SK-N-SH (cell line): ENCODE measurements at regions of chr1 and their contacts with region 1.

Region 1: DNA sequence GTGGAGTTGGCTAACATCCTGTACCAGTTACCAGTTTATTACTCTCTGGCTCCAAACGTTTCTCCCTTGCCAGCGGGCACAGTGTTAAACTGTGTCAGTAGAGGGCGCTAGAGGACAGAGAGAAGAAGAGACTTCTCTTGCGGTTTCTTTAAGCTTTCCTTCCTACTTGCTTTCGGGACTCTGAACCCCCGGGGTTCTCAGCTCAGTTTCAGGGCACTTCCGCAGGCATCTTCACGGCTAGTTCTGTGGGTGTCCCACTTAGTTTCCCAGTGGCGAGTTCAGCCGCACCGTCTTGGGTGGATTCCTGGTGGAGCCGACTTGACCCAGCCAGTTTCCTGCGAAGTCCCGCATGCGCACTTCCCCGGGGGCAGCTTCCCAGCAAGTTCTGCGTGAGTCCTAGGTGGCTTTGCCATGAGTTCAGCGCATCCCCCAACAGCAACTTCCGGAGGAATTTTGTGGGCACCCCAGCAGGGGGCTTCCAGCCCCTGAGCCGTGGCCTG is 37.9 kb upstream of the BTG2 start:
- DNase-seq: peak; percentile 80
- H3K4me3 ChIP-seq: peak overlapping the region; percentile 65
- H3K27ac ChIP-seq: peak overlapping the region in 1 of 2 experiments; percentile 75; a peak in 1 of 4 replicates
- H3K4me1 ChIP-seq: peaks cover 0 to 15% of the 10 kb centered on the region in 2 experiments; a peak in 1 of 4 replicates
- H3K27me3 ChIP-seq: no peaks in the 10 kb centered on the region; the same call in 1 of the 2 replicates
- CTCF ChIP-seq: peak; percentile 95
- EP300 ChIP-seq: no peak
- RAD21 ChIP-seq: peak; percentile 79

Region 2: DNA sequence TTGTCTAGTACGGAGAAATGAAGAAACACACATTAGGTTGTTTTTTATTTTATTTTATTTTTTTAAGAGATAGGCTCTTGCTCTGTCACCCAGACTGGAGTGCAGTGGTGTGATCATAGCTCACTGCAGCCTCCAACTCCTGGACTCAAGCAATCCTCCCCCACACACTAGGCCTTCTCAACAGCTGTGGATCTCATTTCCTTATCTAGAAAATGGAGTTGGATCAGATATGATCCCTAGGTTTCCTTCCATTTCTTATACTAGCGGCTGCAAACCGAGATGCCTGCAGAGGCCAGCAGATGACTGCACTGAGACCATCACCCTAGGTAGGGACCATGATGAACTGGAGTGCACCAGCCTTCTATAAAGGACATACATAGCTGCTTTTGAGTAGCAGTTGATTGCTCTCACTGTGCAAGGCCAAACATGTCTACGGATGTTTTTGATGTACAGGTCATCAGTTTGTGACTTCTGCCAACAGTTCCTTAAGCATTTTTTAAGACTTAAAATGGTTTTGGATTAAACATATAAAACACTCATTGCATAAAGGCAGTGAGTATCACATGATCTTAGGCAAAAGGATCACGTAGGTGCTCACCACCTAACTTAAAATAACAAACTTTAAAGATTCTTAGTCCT is 329.0 kb before region 1 on chr1:
- CTCF ChIA-PET with region 1: no interaction called
- POLR2A ChIA-PET with region 1: no interaction called
- DNase-seq: no peak
- H3K4me3 ChIP-seq: no peak overlapping the region
- H3K27ac ChIP-seq: no peak overlapping the region
- H3K4me1 ChIP-seq: no peaks in the 10 kb centered on the region
- H3K27me3 ChIP-seq: no peaks in the 10 kb centered on the region
- CTCF ChIP-seq: no peak
- EP300 ChIP-seq: no peak
- RAD21 ChIP-seq: no peak

Region 3: DNA sequence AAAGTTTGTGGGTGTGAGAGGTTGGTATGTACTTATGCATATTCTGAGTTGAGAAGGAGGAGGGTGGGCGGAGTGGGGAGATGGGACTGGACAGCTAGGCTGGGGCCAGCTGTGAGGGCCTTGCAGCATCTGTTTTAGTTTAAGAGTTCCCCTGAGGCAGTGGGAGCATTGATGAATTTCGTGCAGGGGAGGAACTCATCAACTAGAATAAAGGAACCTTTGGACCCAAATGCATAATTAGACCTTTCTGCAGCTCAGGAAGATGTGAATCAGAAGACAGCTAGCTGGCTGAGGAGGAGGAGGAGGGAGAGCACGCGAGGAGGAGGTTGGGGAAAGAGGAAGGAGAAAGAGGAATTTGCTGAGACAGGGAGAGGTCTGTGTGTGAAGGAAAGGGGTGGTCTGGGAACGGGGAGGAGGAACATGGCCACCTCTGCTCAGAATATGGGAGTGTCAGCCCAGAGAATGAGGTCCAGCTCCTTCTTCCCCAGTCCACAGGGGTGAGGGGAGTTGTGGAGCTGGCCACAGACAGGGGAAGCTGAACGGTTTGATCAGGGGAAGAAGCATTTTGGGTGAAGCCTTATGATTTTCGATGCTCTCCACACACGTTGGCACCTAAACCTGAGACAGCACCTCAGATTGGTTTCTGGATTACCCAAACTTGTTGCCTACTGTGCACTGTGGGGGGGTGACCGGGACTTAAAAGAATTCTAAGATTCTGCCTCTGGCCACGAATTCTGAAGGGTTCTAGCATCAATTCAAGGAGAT is 209.3 kb before region 1 on chr1:
- CTCF ChIA-PET with region 1: interaction called, 228 read pairs
- POLR2A ChIA-PET with region 1: no interaction called
- DNase-seq: peak; percentile 83
- H3K4me3 ChIP-seq: no peak overlapping the region
- H3K27ac ChIP-seq: no peak overlapping the region
- H3K4me1 ChIP-seq: peaks cover 0 to 22% of the 10 kb centered on the region in 2 experiments; a peak in 1 of 4 replicates
- H3K27me3 ChIP-seq: no peaks in the 10 kb centered on the region
- CTCF ChIP-seq: no peak
- EP300 ChIP-seq: no peak
- RAD21 ChIP-seq: no peak

Region 4: GRCh38 chr1:203172128-203173010 is 95.0 kb before region 1 on chr1:
- CTCF ChIA-PET with region 1: interaction called, 15 read pairs
- POLR2A ChIA-PET with region 1: no interaction called
- DNase-seq: peak; percentile 77
- H3K4me3 ChIP-seq: no peak overlapping the region
- H3K27ac ChIP-seq: no peak overlapping the region
- H3K4me1 ChIP-seq: peaks cover 5 to 7% of the 10 kb centered on the region in 2 experiments; a peak in 2 of 4 replicates
- H3K27me3 ChIP-seq: no peaks in the 10 kb centered on the region
- CTCF ChIP-seq: peak; percentile 69
- EP300 ChIP-seq: no peak
- RAD21 ChIP-seq: peak; percentile 66

Region 5: DNA sequence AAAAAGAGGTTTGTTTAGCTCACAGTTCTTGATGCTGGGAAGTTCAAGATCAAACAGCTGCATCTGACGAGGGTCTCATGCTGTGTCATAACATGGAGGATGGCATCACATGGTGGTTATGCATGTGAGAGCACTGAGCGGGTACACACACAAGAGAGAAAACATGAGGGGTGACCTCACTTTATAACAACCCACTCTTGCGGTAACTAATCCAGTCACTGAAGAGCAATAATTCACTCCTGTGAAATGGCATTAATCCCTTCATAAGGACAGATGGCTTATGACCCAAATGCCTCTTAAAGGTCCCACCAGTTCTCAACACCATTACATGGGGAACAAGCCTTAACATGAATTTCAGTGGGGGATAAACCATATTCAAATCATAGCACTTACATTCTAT is 14.7 kb before region 1 on chr1:
- CTCF ChIA-PET with region 1: interaction called, 32 read pairs
- POLR2A ChIA-PET with region 1: no interaction called
- DNase-seq: no peak
- H3K4me3 ChIP-seq: no peak overlapping the region
- H3K27ac ChIP-seq: no peak overlapping the region
- H3K4me1 ChIP-seq: no peaks in the 10 kb centered on the region
- H3K27me3 ChIP-seq: no peaks in the 10 kb centered on the region
- CTCF ChIP-seq: no peak
- EP300 ChIP-seq: no peak
- RAD21 ChIP-seq: no peak

Region 6: DNA sequence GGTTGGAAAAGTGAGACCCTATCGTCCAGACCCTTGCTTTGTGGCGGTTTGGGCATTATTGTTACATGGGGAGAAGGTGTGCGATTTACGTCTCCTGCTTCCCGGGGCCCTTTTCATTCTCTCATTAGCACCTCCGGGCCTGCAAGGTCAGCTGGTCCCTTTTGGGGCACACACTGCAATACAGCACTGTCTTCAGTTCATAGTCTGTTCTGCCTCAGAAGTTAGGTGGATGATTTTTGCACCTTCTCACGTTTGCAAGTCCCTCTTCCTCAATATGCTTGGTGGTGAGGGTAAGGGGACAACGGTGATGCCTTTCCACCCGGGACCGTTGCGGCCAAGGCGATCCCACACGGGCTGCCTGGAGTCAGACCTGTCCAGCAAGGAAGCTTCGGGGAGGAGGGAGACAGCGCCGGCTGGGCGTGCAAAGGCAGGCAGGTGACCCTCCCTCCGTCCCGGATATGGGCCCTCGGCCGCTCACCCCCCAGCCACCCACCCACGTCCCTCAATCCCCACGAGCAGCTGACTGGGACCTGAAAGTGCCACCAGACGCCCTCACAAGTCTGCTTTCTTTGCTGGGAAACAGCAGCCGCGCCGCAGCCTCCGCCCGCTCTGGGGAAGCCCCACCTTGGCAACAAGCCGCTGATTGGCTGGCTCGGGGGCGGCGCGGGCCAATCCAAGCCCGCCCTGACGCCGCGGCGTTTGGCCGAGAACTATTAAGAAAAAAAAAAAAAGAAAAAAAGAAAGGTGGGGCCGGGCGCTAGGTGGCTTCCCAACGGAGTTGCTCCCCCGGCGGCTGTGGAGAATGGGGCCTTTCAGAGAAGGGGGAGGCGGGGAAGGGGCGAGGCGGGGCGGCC is 59.7 kb after region 1 on chr1:
- CTCF ChIA-PET with region 1: interaction called, 817 read pairs
- POLR2A ChIA-PET with region 1: no interaction called
- DNase-seq: peak; percentile 97
- H3K4me3 ChIP-seq: peak overlapping the region; percentile 51 to 71
- H3K27ac ChIP-seq: peak overlapping the region in 1 of 2 experiments; percentile 96; a peak in 2 of 4 replicates
- H3K4me1 ChIP-seq: peaks cover 5 to 43% of the 10 kb centered on the region in 2 experiments; a peak in 2 of 4 replicates
- H3K27me3 ChIP-seq: peaks cover 26% of the 10 kb centered on the region
- CTCF ChIP-seq: no peak
- EP300 ChIP-seq: peak; percentile 29 to 92; a peak in 3 of 4 replicates
- RAD21 ChIP-seq: no peak

Region 7: DNA sequence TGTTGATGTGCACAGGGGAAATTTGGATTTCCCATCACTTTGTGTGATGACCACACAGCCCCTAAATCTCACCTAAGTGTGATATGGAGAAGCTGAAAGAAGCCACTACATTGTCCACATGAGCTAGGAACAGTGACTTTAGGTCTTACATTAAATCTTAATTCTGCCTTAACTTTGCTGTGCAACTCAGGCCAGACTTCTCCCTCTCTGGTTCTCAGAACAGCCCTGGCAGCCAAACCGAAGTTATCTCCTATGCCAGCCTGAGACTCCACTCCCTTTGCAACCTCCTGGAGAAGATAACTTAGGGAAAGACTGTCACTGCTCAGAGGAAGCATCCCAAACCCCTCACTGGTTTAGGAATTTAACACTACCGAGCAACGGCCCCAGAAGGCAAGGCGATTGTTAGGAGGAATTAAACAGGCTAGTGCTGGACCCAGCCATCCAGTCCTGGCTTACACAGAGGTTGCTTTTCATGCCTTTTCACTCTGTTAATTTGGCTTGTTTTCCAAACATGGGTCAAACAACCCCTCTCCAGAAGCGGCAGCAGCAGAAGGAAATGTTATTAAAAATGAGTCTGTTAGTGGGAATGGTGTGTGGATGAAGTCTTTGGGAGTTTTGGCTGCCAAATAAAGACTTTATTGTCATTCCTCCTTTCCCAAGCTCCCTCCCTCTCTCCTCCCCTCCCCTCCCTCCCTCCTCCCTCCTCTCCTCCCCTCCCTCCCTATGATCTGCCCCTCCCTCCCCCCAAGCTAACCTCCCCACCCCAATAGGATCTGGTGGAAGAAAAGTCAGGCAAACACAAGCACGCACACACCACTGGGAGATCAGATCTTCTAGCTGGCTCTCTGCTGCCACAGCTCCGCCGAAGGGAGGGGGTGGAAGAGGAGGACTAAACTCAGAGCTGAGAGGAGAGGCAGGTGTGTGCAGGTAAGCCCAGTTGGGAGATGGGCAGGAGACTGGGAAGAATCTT is 207.9 kb after region 1 on chr1 and contains the start of gene PRELP:
- CTCF ChIA-PET with region 1: interaction called, 12 read pairs
- POLR2A ChIA-PET with region 1: no interaction called
- DNase-seq: peak; percentile 67
- H3K4me3 ChIP-seq: no peak within 1 kb of the TSS
- H3K27ac ChIP-seq: no peak within 1 kb of the TSS
- H3K4me1 ChIP-seq: peaks cover 7 to 8% of the 10 kb centered on the region in 2 experiments; a peak in 2 of 4 replicates
- H3K27me3 ChIP-seq: no peaks in the 10 kb centered on the region
- CTCF ChIP-seq: no peak
- EP300 ChIP-seq: no peak
- RAD21 ChIP-seq: no peak
- polyA plus RNA-seq, gene PRELP: 0.26 and 0.48 TPM in 2 replicates